ENCODE measurements at regions of chr11 and their contacts with region 1.

Region 1: DNA sequence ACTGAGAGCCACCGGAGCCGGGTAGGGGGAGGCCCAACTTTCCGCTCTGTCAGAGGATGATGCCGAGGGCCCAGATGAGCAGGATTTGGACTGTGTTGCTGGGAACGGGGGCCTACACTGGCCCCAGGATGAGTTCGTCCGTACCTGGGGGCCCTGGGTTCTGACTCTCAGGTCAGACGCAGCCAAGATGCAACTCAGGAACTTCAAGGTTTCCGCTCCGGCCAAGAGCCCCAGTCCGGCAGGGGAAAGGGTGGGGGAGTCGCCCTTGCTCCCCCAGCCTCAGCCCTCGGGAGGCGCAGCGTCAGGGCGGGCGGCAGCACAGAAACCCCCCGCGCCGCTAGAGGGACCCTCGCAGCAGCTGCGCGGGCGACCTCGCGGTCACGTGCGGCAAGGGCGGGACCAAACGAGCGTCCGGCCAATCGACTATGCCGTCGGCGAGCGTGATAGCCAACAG is 241 bp upstream of the ARL2 start:
- DNase-seq: peak in 5 of 6 donors; percentile 86 to 95 (median 90)
- ATAC-seq: peak; percentile 87 to 94 (median 90)
- H3K4me3 ChIP-seq: peak overlapping the region; percentile 70 to 86 (median 80)
- H3K27ac ChIP-seq: peak overlapping the region; percentile 95 to 99 (median 98)
- H3K4me1 ChIP-seq: peaks cover 0 to 9% (median 0%) of the 10 kb centered on the region in 3 donors
- H3K27me3 ChIP-seq: no peaks in the 10 kb centered on the region
- CTCF ChIP-seq: no peak

Region 2: GRCh38 chr11:64947208-64947814 is 66.4 kb before region 1 on chr11:
- intact Hi-C with region 1: no loop called
- DNase-seq: no peak
- ATAC-seq: peak in 2 of 4 donors; percentile 32 to 47
- H3K4me3 ChIP-seq: no peak overlapping the region
- H3K27ac ChIP-seq: no peak overlapping the region
- H3K4me1 ChIP-seq: no peaks in the 10 kb centered on the region
- H3K27me3 ChIP-seq: no peaks in the 10 kb centered on the region
- CTCF ChIP-seq: no peak

Region 3: DNA sequence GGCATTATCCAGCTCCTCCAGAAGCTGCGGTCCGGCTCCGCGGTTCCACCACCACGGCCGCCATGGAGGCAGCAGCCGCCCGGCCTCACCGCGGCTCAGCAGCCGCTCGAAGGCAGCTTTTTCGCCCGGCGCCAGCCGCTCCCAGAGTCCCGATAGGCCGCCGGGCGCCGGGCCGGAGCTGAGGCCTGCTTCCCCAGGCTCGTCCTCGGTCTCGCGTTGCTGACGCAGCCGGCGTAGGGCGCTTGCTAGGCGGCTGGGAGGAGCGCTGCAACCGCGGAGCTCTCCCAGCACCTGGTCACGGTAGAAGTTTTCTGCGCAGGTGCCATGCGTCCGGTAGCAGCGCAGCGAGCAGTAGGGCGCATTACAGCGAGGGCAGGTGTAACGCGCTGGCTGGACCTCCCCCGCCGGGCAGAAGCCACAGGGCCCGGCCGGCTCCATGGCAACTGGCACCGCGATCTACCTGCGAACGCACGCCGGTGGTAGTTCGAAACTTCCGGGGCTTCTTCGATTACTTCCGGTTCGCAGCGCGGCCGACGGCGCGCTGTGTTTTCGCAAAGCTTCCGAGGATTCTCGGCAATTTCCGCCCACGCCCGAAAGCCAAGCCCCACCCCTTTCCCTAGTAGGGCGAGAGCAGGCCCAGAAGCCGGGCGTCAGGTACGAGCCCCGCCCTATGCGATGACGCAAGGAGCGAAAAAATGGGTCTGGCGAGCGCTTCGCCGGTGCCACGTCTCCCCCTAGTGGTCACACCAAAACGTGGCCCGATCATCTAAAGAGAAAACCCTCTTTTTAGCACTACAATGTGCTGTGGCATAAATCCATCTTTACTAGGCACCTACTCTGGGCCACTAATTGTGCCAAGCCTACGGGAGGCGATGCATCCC is 103.7 kb after region 1 on chr11 and contains the start of gene ZNHIT2:
- intact Hi-C with region 1: loop called in 1 of 3 experiments (anchors 10 kb)
- DNase-seq: peak; percentile 98 to 100 (median 100)
- ATAC-seq: peak; percentile 72 to 89 (median 82)
- H3K4me3 ChIP-seq: peak within 1 kb of the TSS; percentile 43 to 88 (median 82)
- H3K27ac ChIP-seq: peak within 1 kb of the TSS; percentile 81 to 97 (median 84)
- H3K4me1 ChIP-seq: peaks cover 34 to 45% (median 37%) of the 10 kb centered on the region in 3 donors
- H3K27me3 ChIP-seq: no peaks in the 10 kb centered on the region
- CTCF ChIP-seq: peak; percentile 88 to 94 (median 90)
- total RNA-seq, gene ZNHIT2: 4.3 to 11.7 (median 7.1) TPM